ENCODE measurements at regions of chr5 and their contacts with region 1.

Region 1: DNA sequence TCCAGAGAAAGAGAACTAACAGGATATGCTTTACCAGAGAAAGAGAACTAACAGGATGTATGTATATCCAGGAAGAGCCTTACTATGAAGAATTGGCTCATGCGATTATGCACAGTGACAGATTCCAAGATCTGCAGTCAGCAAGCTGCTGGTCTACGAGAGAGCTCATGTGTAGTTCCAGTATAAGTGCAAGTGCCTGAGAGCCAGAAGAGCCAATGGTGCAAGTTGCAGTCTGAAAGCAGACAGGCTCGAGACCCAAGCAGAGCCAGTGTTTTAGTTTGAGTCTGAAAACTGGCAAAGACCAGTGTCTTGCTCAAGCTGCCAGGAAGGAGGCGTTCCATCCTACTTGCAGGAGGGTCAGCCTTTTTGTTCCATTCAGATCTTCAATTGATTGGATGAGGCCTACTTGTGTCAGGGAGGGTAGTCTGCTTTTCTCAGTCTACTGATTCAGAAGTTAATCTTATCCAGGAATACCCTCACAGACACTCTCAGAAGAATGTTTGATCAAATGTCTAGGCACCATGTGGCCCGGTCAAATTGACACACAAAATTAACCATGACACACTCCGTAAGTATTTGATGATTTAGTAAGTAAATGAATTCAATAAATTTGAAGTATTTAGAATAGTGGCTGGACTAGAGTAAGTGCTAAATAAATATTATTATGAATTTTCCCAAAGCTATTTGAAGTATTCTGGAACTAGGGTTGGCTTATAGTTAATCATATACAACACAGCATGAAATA is 372.1 kb upstream of the SGCD start:
- DNase-seq: no peak
- ATAC-seq: no peak
- H3K4me3 ChIP-seq: no peak overlapping the region
- H3K27ac ChIP-seq: no peak overlapping the region
- H3K4me1 ChIP-seq: no peaks in the 10 kb centered on the region
- H3K27me3 ChIP-seq: no peaks in the 10 kb centered on the region

Region 2: DNA sequence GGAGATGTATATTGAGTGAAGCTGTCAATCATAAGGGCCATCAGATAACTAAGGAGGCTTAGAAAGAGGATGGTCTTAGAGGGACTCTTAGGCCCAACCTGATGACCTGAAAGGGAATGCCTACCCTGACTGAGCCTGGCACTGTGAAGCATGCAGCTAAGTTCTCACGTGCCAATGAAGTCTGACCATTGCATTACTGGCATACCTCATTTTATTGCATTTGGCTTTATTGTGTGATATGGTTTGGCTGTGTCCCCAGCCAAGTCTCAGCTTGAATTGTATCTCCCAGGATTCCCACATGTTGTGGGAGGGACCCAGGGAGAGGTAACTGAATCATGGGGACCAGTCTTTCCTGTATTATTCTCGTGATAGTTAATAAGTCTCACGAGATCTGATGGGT is 49.5 kb before region 1 on chr5:
- intact Hi-C with region 1: no loop called
- DNase-seq: no peak
- ATAC-seq: no peak
- H3K4me3 ChIP-seq: no peak overlapping the region
- H3K27ac ChIP-seq: no peak overlapping the region
- H3K4me1 ChIP-seq: no peaks in the 10 kb centered on the region
- H3K27me3 ChIP-seq: no peaks in the 10 kb centered on the region

Region 3: GRCh38 chr5:156824800-156825199 is 869.9 kb after region 1 on chr5:
- intact Hi-C with region 1: loop called in 1 of 4 experiments (anchors 10 kb)
- DNase-seq: no peak
- ATAC-seq: peak; percentile 69 to 78
- H3K4me3 ChIP-seq: no peak overlapping the region
- H3K27ac ChIP-seq: no peak overlapping the region
- H3K4me1 ChIP-seq: peaks cover 2% of the 10 kb centered on the region
- H3K27me3 ChIP-seq: no peaks in the 10 kb centered on the region